K562 (cell line): ENCODE measurements at regions of chr11 and their contacts with region 1.

Region 1: GRCh38 chr11:12761029-12761428 is 86.8 kb downstream of the TEAD1 start:
- DNase-seq: no peak
- ATAC-seq: peak; percentile 62; the same call in 2 of the 3 replicates
- H3K4me3 ChIP-seq: no peak overlapping the region
- H3K27ac ChIP-seq: no peak overlapping the region
- H3K4me1 ChIP-seq: peaks cover 0 to 14% of the 10 kb centered on the region in 2 experiments; a peak in 4 of 5 replicates
- H3K27me3 ChIP-seq: no peaks in the 10 kb centered on the region
- CTCF ChIP-seq: peak in 2 of 3 experiments; percentile 38 to 46; a peak in 3 of 6 replicates
- EP300 ChIP-seq: no peak
- POLR2A ChIP-seq: no peak
- RAD21 ChIP-seq: peak in 1 of 2 experiments; percentile 41; a peak in 1 of 4 replicates

Region 2: DNA sequence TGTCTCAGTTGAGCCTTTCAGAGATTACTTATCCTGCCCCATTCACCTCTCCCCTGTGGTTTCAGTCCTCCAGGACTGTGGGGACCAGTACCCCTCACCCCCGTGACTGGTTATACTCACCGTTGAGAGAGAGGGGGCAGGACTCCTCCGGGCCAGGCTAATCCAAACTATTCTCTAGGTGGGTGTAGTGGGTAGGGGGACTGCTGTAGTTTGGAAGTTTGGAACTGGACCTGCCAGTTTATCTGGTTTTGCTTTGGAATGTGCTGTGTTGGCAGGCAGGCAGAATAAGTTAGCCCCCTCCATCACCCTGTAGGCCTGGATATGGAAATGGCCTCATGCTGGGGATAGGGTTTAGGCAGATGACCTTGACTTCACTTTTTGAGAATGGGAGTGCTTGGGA is 73.3 kb before region 1 on chr11:
- CTCF ChIA-PET with region 1: no interaction called
- POLR2A ChIA-PET with region 1: no interaction called
- in situ Hi-C with region 1: no loop called
- intact Hi-C with region 1: loop called (anchors 5 kb)
- DNase-seq: peak; percentile 38 to 53 (median 41)
- ATAC-seq: peak; percentile 58
- H3K4me3 ChIP-seq: no peak overlapping the region
- H3K27ac ChIP-seq: no peak overlapping the region; the same call in 2 of the 3 replicates
- H3K4me1 ChIP-seq: peaks cover 21 to 66% of the 10 kb centered on the region in 2 experiments
- H3K27me3 ChIP-seq: no peaks in the 10 kb centered on the region
- CTCF ChIP-seq: no peak
- EP300 ChIP-seq: no peak
- POLR2A ChIP-seq: no peak
- RAD21 ChIP-seq: no peak

Region 3: DNA sequence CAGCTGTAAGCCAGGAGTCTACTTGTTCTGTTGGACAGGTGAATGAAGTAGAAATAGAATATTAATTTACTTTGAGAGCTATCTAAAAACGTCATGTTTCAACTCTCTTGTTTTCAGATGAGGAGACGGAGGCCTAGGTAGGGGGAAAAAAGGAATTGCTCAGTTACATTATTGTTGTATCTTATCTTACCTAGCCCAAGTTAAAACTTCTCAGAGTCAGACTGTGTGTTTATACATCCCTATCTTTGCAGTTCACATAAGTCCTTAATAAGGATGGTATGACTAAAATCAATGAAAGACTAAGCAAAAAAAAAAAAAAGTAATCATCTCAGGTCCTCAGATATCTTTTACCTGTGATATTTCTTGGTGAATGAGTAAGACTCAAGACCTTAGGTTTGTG is 24.0 kb before region 1 on chr11:
- CTCF ChIA-PET with region 1: no interaction called
- POLR2A ChIA-PET with region 1: no interaction called
- in situ Hi-C with region 1: no loop called
- intact Hi-C with region 1: no loop called
- DNase-seq: peak in 2 of 4 experiments; percentile 25 to 33
- ATAC-seq: peak; percentile 66
- H3K4me3 ChIP-seq: no peak overlapping the region
- H3K27ac ChIP-seq: no peak overlapping the region
- H3K4me1 ChIP-seq: peaks cover 0 to 11% of the 10 kb centered on the region in 2 experiments; a peak in 2 of 5 replicates
- H3K27me3 ChIP-seq: no peaks in the 10 kb centered on the region
- CTCF ChIP-seq: no peak
- EP300 ChIP-seq: no peak
- POLR2A ChIP-seq: no peak
- RAD21 ChIP-seq: no peak